Activated CD8-positive, alpha-beta T cell treated with anti-CD3 and anti-CD28 coated beads, Interleukin-2, amount 10 ng/mL, durations not matched to agents 7 days and 5 days (primary cell): ENCODE measurements at regions of chr3 and their contacts with region 1.

Region 1: DNA sequence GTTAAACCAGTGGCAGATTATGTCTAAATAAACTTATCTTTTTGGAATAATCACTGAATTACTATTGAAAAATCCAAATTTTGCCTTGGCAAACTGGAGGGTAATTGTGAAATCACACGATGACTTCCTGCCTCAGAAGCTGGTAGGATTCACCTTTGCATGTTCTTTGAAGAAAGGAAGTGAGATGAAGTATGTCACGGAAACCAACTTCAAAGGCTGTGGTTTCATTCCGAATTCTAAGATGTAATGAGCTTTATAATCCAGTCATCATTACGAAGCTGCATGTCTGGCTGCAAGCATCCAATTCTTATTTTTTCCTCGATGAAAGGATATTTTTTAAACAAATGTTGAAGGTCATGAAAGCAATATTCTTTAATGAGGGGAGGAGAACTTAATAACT is 15.0 kb upstream of the ZBED2 start:
- DNase-seq: peak; percentile 84
- ATAC-seq: peak; percentile 73
- H3K4me3 Mint-ChIP-seq: peak overlapping the region; percentile 57
- H3K27ac Mint-ChIP-seq: peak overlapping the region; percentile 94
- H3K4me1 Mint-ChIP-seq: peaks cover 95% of the 10 kb centered on the region
- H3K27me3 Mint-ChIP-seq: no peaks in the 10 kb centered on the region

Region 2: GRCh38 chr3:111594205-111594604 is 16.0 kb before region 1 on chr3:
- CTCF ChIA-PET with region 1: interaction called, 26 read pairs
- POLR2A ChIA-PET with region 1: interaction called, 15 read pairs
- DNase-seq: no peak
- ATAC-seq: peak; percentile 48
- H3K4me3 Mint-ChIP-seq: peak overlapping the region; percentile 29
- H3K27ac Mint-ChIP-seq: peak overlapping the region; percentile 79
- H3K4me1 Mint-ChIP-seq: peaks cover 72% of the 10 kb centered on the region
- H3K27me3 Mint-ChIP-seq: no peaks in the 10 kb centered on the region

Region 3: GRCh38 chr3:111691293-111691909 is 81.2 kb after region 1 on chr3:
- CTCF ChIA-PET with region 1: interaction called, 11 read pairs
- POLR2A ChIA-PET with region 1: no interaction called
- DNase-seq: no peak
- ATAC-seq: no peak
- H3K4me3 Mint-ChIP-seq: no peak overlapping the region
- H3K27ac Mint-ChIP-seq: peak overlapping the region; percentile 53
- H3K4me1 Mint-ChIP-seq: peaks cover 68% of the 10 kb centered on the region
- H3K27me3 Mint-ChIP-seq: no peaks in the 10 kb centered on the region